ENCODE measurements at regions of chr6 and their contacts with region 1.

Region 1: GRCh38 chr6:18323935-18324705 is 59.8 kb upstream of the DEK start:
- DNase-seq: peak; percentile 40
- H3K4me3 ChIP-seq: no peak overlapping the region
- H3K27ac ChIP-seq: no peak overlapping the region
- H3K4me1 ChIP-seq: peaks cover 23% of the 10 kb centered on the region
- H3K27me3 ChIP-seq: no peaks in the 10 kb centered on the region
- CTCF ChIP-seq: peak; percentile 58 to 66

Region 2: DNA sequence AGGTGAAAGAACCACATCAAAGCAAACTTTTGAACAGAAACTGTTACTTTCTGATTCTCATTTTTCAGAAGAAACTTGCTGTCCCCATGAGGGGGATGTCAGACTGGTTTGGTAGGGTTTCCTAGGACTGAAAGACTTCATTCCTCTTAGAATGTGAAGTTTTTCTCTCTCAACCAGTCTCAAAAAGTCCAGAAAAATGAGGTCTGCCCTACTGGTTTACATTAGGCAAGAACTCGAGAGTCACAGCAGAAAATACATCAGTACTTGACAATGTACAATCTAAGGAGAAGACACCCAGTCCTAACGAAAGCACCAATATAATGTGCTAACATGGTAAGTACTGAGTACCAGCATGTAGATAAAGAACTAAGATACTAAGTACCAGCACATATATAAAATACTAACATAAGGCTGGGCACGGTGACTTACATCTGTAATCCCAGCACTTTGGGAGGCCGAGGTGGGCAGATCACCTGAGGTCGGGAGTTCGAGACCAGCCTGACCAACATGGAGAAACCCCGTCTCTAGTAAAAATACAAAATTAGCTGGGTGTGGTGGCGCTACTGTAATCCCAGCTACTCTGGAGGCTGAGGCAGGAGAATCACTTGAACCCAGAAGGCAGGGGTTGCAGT is 188.8 kb before region 1 on chr6:
- CTCF ChIA-PET with region 1: no interaction called
- dilution Hi-C with region 1: no loop called
- in situ Hi-C with region 1: no loop called
- intact Hi-C with region 1: no loop called
- DNase-seq: no peak
- H3K4me3 ChIP-seq: no peak overlapping the region
- H3K27ac ChIP-seq: no peak overlapping the region
- H3K4me1 ChIP-seq: no peaks in the 10 kb centered on the region
- H3K27me3 ChIP-seq: no peaks in the 10 kb centered on the region
- CTCF ChIP-seq: no peak

Region 3: GRCh38 chr6:18155150-18155863 is 168.8 kb before region 1 on chr6 and contains the start of gene KDM1B:
- CTCF ChIA-PET with region 1: no interaction called
- dilution Hi-C with region 1: no loop called
- in situ Hi-C with region 1: no loop called
- intact Hi-C with region 1: loop called (anchors 10 kb)
- DNase-seq: peak; percentile 98
- H3K4me3 ChIP-seq: peak within 1 kb of the TSS; percentile 97 to 99 (median 98)
- H3K27ac ChIP-seq: peak within 1 kb of the TSS; percentile 98
- H3K4me1 ChIP-seq: peaks cover 16% of the 10 kb centered on the region
- H3K27me3 ChIP-seq: no peaks in the 10 kb centered on the region
- CTCF ChIP-seq: no peak
- total RNA-seq, gene KDM1B: 19.5 to 25.1 TPM

Region 4: GRCh38 chr6:18253635-18254034 is 70.5 kb before region 1 on chr6:
- CTCF ChIA-PET with region 1: no interaction called
- dilution Hi-C with region 1: no loop called
- in situ Hi-C with region 1: no loop called
- intact Hi-C with region 1: no loop called
- DNase-seq: no peak
- H3K4me3 ChIP-seq: no peak overlapping the region
- H3K27ac ChIP-seq: no peak overlapping the region
- H3K4me1 ChIP-seq: no peaks in the 10 kb centered on the region
- H3K27me3 ChIP-seq: no peaks in the 10 kb centered on the region
- CTCF ChIP-seq: no peak

Region 5: DNA sequence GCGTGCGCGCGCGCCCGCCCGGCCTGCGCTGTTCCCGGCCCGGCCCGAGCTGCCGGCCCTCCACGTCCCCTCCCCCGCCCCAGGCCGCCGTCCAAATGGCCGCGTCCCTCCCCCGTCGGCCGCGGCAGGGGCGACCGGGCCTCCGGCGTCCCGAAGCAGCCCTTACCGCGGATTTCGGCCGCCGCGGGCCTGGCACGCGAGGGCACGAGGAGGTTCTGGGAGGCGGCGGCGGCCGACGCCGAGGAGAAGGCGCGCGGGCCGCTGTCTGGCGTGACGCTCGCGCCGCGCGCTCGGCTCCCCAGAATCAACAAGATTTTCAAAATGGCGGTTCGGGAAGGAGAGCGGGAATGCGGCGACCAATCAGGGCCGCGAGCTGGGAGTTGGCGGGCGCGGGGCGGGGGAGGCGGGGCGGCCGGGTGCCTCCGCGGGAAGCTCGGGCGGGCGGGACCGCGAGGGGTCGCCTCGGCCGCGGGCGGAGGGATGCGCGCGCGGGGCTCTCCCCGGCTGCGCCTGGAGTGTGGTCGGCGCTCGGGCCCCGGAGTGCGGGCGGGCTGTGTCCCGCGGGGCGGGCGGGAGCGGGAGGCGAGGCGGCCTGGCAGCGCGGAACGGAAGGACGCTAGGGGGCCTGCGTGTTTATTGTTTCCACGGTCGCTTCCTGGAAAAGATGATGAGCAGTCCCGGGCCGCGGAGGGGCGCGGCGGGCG is 59.7 kb before region 1 on chr6 and contains the start of gene DEK:
- CTCF ChIA-PET with region 1: no interaction called
- dilution Hi-C with region 1: no loop called
- in situ Hi-C with region 1: no loop called
- intact Hi-C with region 1: loop called (anchors 5 kb)
- DNase-seq: peak; percentile 74
- H3K4me3 ChIP-seq: peak within 1 kb of the TSS; percentile 72 to 91 (median 82)
- H3K27ac ChIP-seq: peak within 1 kb of the TSS; percentile 77
- H3K4me1 ChIP-seq: peaks cover 41% of the 10 kb centered on the region
- H3K27me3 ChIP-seq: no peaks in the 10 kb centered on the region
- CTCF ChIP-seq: peak; percentile 19 to 61
- total RNA-seq, gene DEK: 34.5 to 103 TPM

Region 6: GRCh38 chr6:18277237-18278006 is 46.7 kb before region 1 on chr6:
- CTCF ChIA-PET with region 1: no interaction called
- dilution Hi-C with region 1: no loop called
- in situ Hi-C with region 1: no loop called
- intact Hi-C with region 1: no loop called
- DNase-seq: peak; percentile 21
- H3K4me3 ChIP-seq: peak overlapping the region; percentile 53 to 59 (median 58)
- H3K27ac ChIP-seq: no peak overlapping the region
- H3K4me1 ChIP-seq: peaks cover 18% of the 10 kb centered on the region
- H3K27me3 ChIP-seq: no peaks in the 10 kb centered on the region
- CTCF ChIP-seq: no peak

Region 7: GRCh38 chr6:18343741-18344140 is 19.6 kb after region 1 on chr6:
- CTCF ChIA-PET with region 1: interaction called, 9 read pairs
- dilution Hi-C with region 1: no loop called
- in situ Hi-C with region 1: no loop called
- intact Hi-C with region 1: loop called (anchors 1 kb)
- DNase-seq: peak; percentile 94
- H3K4me3 ChIP-seq: no peak overlapping the region
- H3K27ac ChIP-seq: peak overlapping the region; percentile 97
- H3K4me1 ChIP-seq: peaks cover 58% of the 10 kb centered on the region
- H3K27me3 ChIP-seq: no peaks in the 10 kb centered on the region
- CTCF ChIP-seq: no peak

Region 8: GRCh38 chr6:18457065-18457812 is 133.1 kb after region 1 on chr6:
- CTCF ChIA-PET with region 1: no interaction called
- dilution Hi-C with region 1: no loop called
- in situ Hi-C with region 1: no loop called
- intact Hi-C with region 1: loop called (anchors 5 kb)
- DNase-seq: peak; percentile 66
- H3K4me3 ChIP-seq: peak overlapping the region in 1 of 3 experiments; percentile 1
- H3K27ac ChIP-seq: peak overlapping the region; percentile 62
- H3K4me1 ChIP-seq: peaks cover 22% of the 10 kb centered on the region
- H3K27me3 ChIP-seq: no peaks in the 10 kb centered on the region
- CTCF ChIP-seq: no peak

Region 9: DNA sequence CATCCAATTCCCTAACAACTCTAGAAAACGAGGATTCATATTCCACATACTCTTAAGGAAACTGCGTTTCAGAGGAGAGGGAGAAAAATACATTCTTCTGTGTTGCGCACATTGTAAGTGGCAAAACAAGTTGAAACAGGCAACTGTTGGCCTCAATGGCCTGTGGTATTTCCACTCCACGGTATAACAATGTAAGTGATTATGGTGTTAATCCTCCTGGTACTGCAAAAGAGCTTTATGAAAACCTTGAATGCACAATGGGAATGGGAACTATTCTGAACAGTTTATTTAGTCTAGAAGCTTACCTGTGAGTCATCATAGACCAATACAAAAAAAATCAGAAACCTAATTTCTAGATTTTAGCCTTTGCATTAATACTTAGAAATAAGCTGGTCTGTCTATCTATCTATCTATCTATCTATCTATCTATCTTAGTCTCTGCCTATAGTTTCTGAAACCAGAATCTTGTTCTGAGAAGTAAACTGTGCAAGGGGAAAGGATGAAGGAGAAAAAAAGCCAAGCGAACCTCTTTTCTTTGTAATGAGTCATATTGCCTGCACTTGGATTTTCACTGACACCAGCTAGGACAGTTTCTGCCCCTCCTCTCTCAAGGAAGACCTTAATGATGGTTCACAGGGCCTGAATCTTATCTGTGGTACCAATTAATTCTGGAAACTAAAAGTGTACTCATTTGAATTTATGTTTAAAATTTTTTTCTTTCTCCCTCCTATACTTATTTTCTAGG is 164.6 kb after region 1 on chr6:
- CTCF ChIA-PET with region 1: no interaction called
- dilution Hi-C with region 1: no loop called
- in situ Hi-C with region 1: no loop called
- intact Hi-C with region 1: loop called (anchors 5 kb)
- DNase-seq: peak; percentile 93
- H3K4me3 ChIP-seq: peak overlapping the region in 1 of 3 experiments; percentile 21
- H3K27ac ChIP-seq: peak overlapping the region; percentile 91
- H3K4me1 ChIP-seq: peaks cover 23% of the 10 kb centered on the region
- H3K27me3 ChIP-seq: no peaks in the 10 kb centered on the region
- CTCF ChIP-seq: no peak

Measured in mammary epithelial cell (primary cell).